Naive thymus-derived CD4-positive, alpha-beta T cell (primary cell): ENCODE measurements at regions of chr2 and their contacts with region 1.

Region 1: DNA sequence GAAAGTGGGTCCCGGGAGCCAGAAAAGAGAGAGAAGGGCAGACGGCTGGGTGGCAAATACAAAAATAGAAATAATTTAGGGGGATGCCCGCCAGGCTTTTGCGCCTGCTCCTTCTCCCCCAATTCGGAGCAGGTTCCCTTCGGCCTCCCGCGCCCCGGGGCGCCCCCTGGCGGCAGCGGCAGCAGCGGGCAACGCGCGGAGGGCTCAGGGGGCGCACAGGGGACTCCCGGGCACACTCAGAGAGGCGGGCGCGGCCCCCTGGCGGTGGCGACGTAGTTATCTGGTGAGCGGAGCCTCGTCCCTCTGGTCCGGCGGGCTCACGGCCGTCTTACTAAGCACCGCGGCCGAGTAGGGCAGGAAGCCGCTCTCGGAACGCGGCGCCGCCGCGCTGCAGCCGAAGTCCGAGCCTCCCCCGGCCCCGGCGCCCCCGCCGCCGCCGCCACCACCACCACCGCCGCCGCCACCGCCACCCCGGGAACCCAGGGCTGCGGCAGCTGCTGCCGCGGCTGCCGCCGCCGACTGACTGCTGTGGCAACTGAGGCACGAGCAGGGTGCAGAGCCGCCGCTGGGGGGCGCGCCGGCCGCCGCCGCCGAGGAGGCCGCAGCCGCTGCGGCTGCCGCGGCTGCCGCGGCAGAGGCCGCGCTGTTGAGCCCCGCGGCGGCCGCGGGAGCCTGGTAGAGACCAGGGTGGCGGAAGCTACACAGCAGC is 3.8 kb downstream of the EVX2 start:
- DNase-seq: no peak
- ATAC-seq: peak; percentile 48
- H3K4me3 ChIP-seq: no peak overlapping the region
- H3K4me3 Mint-ChIP-seq: peak overlapping the region; percentile 64 to 82 (median 76)
- H3K27ac ChIP-seq: no peak overlapping the region
- H3K27ac Mint-ChIP-seq: peak overlapping the region in 6 of 9 donors; percentile 58 to 98 (median 90)
- H3K4me1 ChIP-seq: peaks cover 0 to 7% of the 10 kb centered on the region in 2 donors
- H3K4me1 Mint-ChIP-seq: peaks cover 0 to 29% (median 15%) of the 10 kb centered on the region in 7 donors
- H3K27me3 ChIP-seq: peaks cover 41 to 79% of the 10 kb centered on the region in 2 donors
- H3K27me3 Mint-ChIP-seq: peaks cover 67 to 83% (median 80%) of the 10 kb centered on the region in 5 donors

Region 2: DNA sequence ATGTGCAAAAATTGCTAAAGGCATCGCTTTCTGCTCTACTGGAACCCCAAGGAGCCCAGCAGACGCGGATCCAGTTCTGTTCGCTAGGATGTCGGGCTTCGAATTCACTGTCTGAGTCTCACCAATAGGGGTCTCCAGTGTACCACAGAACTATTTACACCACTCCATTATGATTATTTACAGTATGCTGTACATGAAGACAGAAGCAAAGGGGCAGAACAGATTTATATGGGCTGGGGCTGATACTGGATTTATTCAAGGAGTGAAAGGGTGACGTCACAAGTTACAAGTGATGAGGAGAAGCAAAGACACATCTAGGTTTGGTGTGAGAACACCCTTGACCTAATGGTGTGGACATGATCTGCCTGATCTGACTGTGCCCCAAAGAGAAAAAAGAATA is 713.2 kb before region 1 on chr2:
- CTCF ChIA-PET with region 1: no interaction called
- POLR2A ChIA-PET with region 1: no interaction called
- intact Hi-C with region 1: loop called in 1 of 2 experiments (anchors 5 kb)
- DNase-seq: peak in 3 of 9 donors; percentile 6 to 22 (median 14)
- ATAC-seq: peak; percentile 76
- H3K4me3 ChIP-seq: no peak overlapping the region
- H3K4me3 Mint-ChIP-seq: no peak overlapping the region
- H3K27ac ChIP-seq: no peak overlapping the region
- H3K27ac Mint-ChIP-seq: no peak overlapping the region
- H3K4me1 ChIP-seq: no peaks in the 10 kb centered on the region
- H3K4me1 Mint-ChIP-seq: no peaks in the 10 kb centered on the region
- H3K27me3 ChIP-seq: peaks cover 0 to 5% of the 10 kb centered on the region in 2 donors
- H3K27me3 Mint-ChIP-seq: peaks cover 13 to 32% (median 20%) of the 10 kb centered on the region in 5 donors

Region 3: DNA sequence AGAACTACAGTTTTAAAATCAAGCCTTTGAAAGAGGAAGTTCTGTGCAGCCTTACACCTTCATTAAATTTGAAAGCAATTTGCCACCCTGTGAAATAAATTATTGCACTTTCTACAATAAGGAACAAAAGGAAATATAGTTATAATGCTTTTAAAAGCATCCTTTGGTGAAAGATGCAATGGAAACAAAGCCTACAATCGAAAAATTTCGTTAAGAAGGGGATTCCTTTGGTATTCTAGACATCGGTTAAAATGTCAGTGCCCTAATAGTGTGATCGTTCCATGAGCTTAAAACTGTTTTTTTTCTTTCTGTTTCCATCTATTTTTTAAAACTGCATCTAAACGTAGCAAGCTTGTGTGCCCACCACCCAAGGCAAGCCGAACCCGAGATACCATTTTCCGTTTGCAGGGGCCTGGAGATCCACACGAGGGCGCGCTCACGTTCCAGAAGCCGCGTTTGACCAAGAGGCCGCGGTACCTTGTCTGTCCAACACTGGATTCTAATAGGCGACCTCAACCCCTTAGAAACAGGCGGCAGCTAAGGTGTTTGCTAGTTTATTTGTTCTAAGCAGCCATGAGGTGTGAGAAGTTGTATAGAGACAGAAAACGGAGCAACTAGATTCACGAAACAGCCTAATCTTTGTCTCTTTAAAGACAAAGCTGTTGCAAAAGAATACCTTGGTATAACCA is 31.1 kb after region 1 on chr2:
- CTCF ChIA-PET with region 1: no interaction called
- POLR2A ChIA-PET with region 1: no interaction called
- intact Hi-C with region 1: loop called (anchors 1 to 5 kb)
- DNase-seq: no peak
- ATAC-seq: no peak
- H3K4me3 ChIP-seq: no peak overlapping the region
- H3K4me3 Mint-ChIP-seq: peak overlapping the region in 3 of 10 donors; percentile 3 to 30 (median 11)
- H3K27ac ChIP-seq: no peak overlapping the region
- H3K27ac Mint-ChIP-seq: peak overlapping the region in 4 of 9 donors; percentile 21 to 71 (median 44)
- H3K4me1 ChIP-seq: peaks cover 0 to 15% of the 10 kb centered on the region in 2 donors
- H3K4me1 Mint-ChIP-seq: peaks cover 5 to 25% (median 16%) of the 10 kb centered on the region in 7 donors
- H3K27me3 ChIP-seq: peaks cover 21 to 79% of the 10 kb centered on the region in 2 donors
- H3K27me3 Mint-ChIP-seq: peaks cover 72 to 87% (median 77%) of the 10 kb centered on the region in 5 donors